BJ (cell line): ENCODE measurements at regions of chr5 and their contacts with region 1.

Region 1: DNA sequence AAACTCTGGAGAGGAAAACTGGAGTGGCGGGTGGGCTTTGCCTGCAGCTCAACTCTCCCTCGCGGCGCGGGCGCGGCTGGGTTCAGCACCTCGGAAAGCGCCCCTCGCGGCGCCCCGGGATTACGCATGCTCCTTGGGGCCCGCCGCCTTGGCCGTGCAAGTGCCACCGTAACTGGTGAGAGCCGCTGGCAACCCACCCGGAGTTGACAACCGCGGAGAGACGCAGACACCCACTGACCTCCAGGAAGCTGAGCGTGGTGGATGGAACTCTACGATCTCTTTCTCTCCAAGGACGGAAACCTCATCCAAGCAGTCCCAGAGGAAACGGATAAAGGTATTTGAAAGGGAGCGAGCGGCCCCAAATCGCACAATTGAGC is 194 bp upstream of the RXFP3 start:
- DNase-seq: no peak
- H3K4me3 ChIP-seq: peak overlapping the region; percentile 36
- H3K27me3 ChIP-seq: peaks cover 33% of the 10 kb centered on the region
- CTCF ChIP-seq: no peak

Region 2: GRCh38 chr5:33433303-33434240 is 502.4 kb before region 1 on chr5:
- CTCF ChIA-PET with region 1: interaction called, 35 read pairs
- POLR2A ChIA-PET with region 1: no interaction called
- DNase-seq: no peak
- H3K4me3 ChIP-seq: no peak overlapping the region
- H3K27me3 ChIP-seq: no peaks in the 10 kb centered on the region
- CTCF ChIP-seq: no peak

Region 3: GRCh38 chr5:33440482-33441240 is 495.3 kb before region 1 on chr5 and contains the start of gene TARS1:
- CTCF ChIA-PET with region 1: interaction called, 35 read pairs
- POLR2A ChIA-PET with region 1: no interaction called
- DNase-seq: peak; percentile 100
- H3K4me3 ChIP-seq: peak within 1 kb of the TSS; percentile 76
- H3K27me3 ChIP-seq: no peaks in the 10 kb centered on the region
- CTCF ChIP-seq: no peak
- polyA plus RNA-seq, gene TARS1: 121 and 228 TPM in 2 replicates

Region 4: GRCh38 chr5:33588654-33589372 is 347.2 kb before region 1 on chr5:
- CTCF ChIA-PET with region 1: interaction called, 16 read pairs
- POLR2A ChIA-PET with region 1: interaction called, 16 read pairs
- DNase-seq: no peak
- H3K4me3 ChIP-seq: no peak overlapping the region
- H3K27me3 ChIP-seq: no peaks in the 10 kb centered on the region
- CTCF ChIP-seq: peak; percentile 41

Region 5: GRCh38 chr5:33772380-33772897 is 163.6 kb before region 1 on chr5:
- CTCF ChIA-PET with region 1: no interaction called
- POLR2A ChIA-PET with region 1: no interaction called
- DNase-seq: no peak
- H3K4me3 ChIP-seq: no peak overlapping the region
- H3K27me3 ChIP-seq: no peaks in the 10 kb centered on the region
- CTCF ChIP-seq: no peak

Region 6: GRCh38 chr5:33891788-33892619 is 44.0 kb before region 1 on chr5 and contains the start of gene ADAMTS12:
- CTCF ChIA-PET with region 1: interaction called, 13 read pairs
- POLR2A ChIA-PET with region 1: no interaction called
- DNase-seq: peak; percentile 31
- H3K4me3 ChIP-seq: peak within 1 kb of the TSS; percentile 62
- H3K27me3 ChIP-seq: no peaks in the 10 kb centered on the region
- CTCF ChIP-seq: no peak
- polyA plus RNA-seq, gene ADAMTS12: 25.6 and 30.1 TPM in 2 replicates

Region 7: DNA sequence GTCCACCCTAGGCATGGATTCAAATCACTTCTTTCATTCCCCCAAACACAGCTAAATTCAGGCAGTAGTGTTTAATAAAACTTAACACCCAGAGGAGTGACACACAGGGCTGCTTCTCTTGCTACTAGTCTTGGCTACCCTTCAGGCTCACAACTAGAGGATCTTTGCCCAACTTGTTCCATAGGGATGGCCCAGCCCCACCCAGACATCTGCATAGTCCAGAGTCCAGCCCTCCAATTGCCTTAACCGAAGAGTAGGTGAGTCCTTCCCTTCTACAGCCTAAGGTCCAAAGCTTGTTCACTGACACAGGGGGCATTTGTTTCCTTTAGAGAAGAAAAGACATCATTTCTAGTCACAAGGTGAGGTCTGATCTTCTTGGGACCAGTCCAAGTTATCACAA is 15.0 kb before region 1 on chr5:
- CTCF ChIA-PET with region 1: interaction called, 16 read pairs
- POLR2A ChIA-PET with region 1: no interaction called
- DNase-seq: no peak
- H3K4me3 ChIP-seq: no peak overlapping the region
- H3K27me3 ChIP-seq: peaks cover 3% of the 10 kb centered on the region
- CTCF ChIP-seq: no peak

Region 8: DNA sequence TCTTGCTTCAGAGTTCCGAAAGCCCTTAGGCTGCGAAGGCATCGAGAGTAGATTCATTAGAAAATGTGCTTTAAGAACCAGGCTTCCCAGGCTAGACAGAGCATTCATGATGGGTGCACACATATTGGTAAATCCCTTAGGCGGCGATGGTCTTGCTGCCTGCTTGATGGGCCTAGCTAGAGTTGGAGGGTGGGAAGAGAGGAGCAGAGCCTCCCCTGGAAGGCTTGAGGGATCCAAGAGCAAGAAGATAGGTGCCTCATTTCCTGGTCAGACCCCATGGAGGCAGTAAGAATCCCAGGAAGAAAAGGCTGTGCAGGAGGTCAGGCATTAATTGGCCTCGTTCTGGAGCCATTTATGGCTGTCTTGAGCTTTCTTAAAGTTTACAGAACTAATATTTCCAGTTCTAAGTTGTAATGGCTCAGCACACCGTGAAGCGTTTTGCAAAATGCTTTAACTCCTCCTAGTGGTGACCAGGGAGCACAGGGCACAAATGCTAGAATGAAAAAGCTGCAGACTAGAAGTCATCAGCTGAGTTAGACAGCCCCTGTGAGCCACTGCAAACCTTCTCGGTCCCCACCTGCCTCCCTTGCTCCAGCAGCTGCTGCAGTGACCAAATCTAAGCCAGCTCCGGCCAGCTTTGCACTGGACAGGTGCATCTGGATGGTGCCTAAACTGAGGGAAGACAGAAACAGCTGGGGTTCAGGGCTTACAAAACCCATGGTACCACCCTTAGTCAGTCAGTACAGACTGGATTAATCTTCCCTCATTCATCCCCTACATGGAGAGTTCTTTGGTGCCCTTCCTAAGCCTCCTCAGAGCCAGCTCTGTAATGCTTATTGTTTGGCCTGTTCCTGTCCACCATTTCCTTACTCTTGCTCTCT is 33.8 kb after region 1 on chr5:
- CTCF ChIA-PET with region 1: interaction called, 19 read pairs
- POLR2A ChIA-PET with region 1: no interaction called
- DNase-seq: no peak
- H3K4me3 ChIP-seq: no peak overlapping the region
- H3K27me3 ChIP-seq: peaks cover 4% of the 10 kb centered on the region; the same call in 1 of the 2 replicates
- CTCF ChIP-seq: peak; percentile 84